Head of caudate nucleus (tissue), 42 donors: ENCODE measurements at regions of chr20 and their contacts with region 1.

Region 1: GRCh38 chr20:41173161-41173721 is 35.9 kb downstream of the PLCG1 start:
- DNase-seq: peak; percentile 75 to 97 (median 92)

Region 2: DNA sequence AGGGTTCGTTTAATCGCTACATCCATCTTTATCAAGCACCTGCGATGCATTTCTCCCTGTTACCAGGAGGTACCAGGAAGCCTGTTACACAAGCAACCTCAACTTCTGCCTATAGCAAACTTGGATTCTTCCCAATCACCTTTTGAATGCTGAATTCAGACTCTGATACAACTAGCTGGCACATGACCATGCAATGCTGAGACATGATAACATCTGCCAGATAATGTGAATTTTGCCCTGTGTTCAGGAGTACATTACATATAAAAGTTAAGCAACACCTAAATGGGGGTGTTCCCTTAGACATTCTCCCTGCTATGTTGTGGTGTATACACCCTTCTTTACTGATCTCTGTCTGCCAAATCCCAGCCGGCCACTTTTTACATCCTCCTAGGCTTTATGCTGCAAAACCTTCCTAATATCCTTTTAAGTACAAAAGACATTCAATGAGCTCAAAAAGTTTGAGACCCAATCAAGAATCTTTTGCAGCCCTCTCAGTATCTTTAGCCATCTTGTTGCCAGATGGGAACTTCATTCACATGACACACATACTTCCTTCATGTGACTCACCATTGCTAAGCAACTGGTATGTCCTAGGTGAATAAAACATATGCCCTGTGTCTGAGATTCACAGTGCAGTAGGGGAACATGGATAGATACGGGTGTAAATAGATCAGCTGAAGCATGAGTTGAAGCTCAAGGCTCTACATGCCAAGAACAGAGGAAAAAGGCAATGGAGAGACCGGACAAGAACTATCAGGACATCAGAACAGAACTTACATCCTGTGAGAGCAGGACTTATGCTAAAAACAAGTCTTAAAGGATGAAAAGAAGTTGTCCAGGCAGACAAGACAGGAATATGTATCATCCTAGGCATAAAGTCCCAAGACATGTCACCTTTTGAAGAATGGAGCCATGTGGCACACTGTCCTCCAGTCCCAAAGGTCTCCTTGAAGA is 60.0 kb after region 1 on chr20:
- intact Hi-C with region 1: loop called (anchors 2 kb)
- DNase-seq: no peak

Region 3: DNA sequence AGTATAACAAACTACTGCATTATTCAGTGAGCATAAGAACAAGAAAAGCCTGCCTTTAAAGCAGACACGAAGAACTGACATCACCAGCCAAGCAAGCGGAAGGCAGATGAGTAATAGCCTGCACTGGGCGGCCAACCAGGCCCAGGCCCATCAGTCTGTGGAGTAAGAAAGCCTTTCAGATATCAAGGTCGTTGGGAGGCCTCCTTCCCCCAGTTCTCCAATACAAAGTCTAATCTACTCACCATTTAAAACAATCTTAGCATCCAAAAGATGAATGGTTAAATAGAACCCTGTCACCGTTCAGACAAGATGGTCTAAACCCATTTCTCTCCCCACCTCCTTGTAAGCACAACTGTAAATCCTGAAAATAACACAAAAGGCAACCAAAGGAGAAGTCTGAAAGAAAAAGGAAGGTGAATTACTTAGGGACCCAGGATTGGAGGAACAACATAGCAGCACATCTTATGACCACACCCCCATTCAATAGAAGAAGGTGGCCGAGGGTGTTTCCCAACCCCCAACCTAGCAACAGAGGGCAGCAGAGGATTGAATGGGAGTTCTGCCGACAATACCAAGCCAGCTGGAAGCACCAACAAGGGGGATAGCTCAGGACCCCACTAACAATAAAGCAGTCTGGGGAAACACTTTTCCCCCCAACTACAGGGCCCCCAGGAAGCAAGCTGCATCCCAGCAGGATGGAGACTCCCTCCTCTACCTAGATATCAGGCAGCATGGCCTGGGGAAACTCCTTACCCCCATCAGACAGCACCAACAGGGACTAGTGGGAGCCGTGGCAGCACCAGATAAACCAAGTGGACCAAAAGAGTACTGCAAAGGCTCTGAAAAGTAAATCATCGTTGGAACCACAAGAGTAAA is 76.4 kb after region 1 on chr20:
- intact Hi-C with region 1: loop called (anchors 5 kb)
- DNase-seq: peak in 38 of 42 donors; percentile 25 to 88 (median 60)

Region 4: DNA sequence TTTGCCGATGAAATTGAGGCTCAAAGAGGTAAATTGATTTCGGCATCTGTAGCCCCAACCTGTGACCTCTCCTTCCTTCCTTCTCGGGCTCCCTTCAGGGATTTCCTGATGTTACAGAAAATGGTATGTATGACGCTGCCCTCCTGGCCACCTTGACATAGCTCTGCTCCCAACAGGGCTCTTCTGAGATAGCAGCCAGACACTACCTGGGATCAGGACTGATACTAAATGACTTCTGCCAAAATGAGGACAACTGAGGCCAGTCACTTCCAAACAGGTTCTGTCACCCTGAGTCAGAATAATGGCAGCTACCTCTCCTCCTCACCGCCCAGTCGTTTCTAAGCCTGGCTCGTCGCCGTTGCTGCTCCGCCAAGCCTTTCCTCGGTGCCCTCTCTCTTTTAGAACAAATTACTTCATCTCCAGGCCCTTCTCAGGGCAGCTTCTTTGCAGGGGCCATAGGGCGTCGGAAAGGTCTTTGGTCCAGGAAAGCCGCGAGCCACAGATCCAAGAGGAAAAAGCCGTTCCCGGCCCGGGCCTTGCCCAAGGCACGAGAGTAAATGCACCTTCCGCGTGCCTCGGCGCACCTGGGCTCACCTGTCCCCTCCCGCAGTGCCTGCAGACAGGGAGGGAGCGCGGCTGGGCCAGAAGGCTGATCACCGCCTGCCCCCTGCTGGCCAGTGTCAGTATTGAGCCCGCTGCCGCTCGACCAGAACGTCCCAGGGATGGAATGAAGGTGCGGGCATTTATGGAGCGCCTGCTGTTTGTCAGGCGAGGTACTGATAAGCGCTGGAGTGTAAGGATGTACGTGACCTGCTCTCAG is 166.5 kb after region 1 on chr20:
- intact Hi-C with region 1: loop called (anchors 5 kb)
- DNase-seq: peak; percentile 74 to 94 (median 86)

Region 5: GRCh38 chr20:41411391-41411847 is 238.2 kb after region 1 on chr20:
- intact Hi-C with region 1: loop called (anchors 10 kb)
- DNase-seq: no peak